ENCODE measurements at regions of chr17 and their contacts with region 1.

Region 1: DNA sequence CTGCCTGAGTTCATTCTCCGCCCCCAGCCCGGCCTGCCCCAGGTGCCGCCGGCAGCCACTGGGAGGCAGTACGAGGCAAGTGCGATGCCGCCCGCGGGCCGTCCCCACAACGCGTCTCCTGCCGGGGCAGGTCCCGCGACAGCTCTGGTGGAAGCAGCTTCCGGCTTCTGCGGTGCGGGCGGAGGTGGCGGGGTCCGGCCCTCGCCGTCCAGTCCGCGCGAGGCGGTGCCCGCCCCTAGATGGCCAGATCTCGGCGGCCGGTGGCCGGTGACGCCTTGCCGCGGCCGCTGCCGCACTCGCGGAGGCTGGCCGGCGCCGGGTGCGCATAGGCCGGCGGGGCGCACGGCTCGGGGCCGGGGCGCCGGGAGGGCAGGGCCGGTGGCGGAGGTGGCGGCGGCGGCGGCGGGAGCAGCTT is 1.8 kb downstream of the GJD3 start:
- DNase-seq: peak in 1 of 5 donors; percentile 45
- H3K4me3 ChIP-seq: peak overlapping the region; percentile 26
- H3K27ac ChIP-seq: no peak overlapping the region
- H3K4me1 ChIP-seq: peaks cover 5% of the 10 kb centered on the region
- H3K27me3 ChIP-seq: no peaks in the 10 kb centered on the region
- CTCF ChIP-seq: peak in 1 of 3 donors; percentile 14
- EP300 ChIP-seq: no peak
- POLR2A ChIP-seq: no peak

Region 2: GRCh38 chr17:40191237-40192208 is 171.2 kb before region 1 on chr17:
- intact Hi-C with region 1: loop called in 1 of 4 experiments (anchors 10 kb)
- DNase-seq: peak; percentile 77 to 85 (median 82)
- H3K4me3 ChIP-seq: peak overlapping the region; percentile 65
- H3K27ac ChIP-seq: peak overlapping the region; percentile 43 to 46
- H3K4me1 ChIP-seq: peaks cover 5% of the 10 kb centered on the region
- H3K27me3 ChIP-seq: no peaks in the 10 kb centered on the region
- CTCF ChIP-seq: peak; percentile 31 to 60 (median 56)
- EP300 ChIP-seq: no peak
- POLR2A ChIP-seq: no peak

Region 3: DNA sequence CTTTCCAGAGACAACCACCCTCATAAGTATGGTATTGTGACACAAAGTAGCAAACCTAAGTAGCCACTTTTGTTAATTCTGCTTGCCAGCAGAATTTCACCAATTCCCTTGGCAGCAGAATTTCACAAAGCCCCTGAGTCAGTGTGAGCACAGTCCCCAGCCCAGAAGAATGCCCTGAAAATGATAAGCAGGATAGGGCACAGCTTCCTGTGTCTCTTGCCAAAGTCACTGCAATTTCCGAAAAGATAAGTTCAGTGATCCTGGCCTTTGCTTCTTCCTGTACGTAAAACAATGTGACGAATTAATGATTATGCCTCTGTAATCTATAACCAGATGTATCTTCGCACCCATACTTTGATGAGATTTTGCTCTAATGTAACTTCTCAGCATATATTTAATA is 159.6 kb before region 1 on chr17:
- intact Hi-C with region 1: loop called in 3 of 4 experiments (anchors 5 to 10 kb)
- DNase-seq: no peak
- H3K4me3 ChIP-seq: no peak overlapping the region
- H3K27ac ChIP-seq: no peak overlapping the region
- H3K4me1 ChIP-seq: no peaks in the 10 kb centered on the region
- H3K27me3 ChIP-seq: no peaks in the 10 kb centered on the region
- CTCF ChIP-seq: no peak
- EP300 ChIP-seq: no peak
- POLR2A ChIP-seq: no peak

Region 4: GRCh38 chr17:40209404-40210093 is 153.2 kb before region 1 on chr17:
- intact Hi-C with region 1: loop called in 2 of 4 experiments (anchors 5 to 10 kb)
- DNase-seq: no peak
- H3K4me3 ChIP-seq: no peak overlapping the region
- H3K27ac ChIP-seq: no peak overlapping the region
- H3K4me1 ChIP-seq: no peaks in the 10 kb centered on the region
- H3K27me3 ChIP-seq: no peaks in the 10 kb centered on the region
- CTCF ChIP-seq: no peak
- EP300 ChIP-seq: no peak
- POLR2A ChIP-seq: no peak

Region 5: GRCh38 chr17:40433551-40434415 is 71.1 kb after region 1 on chr17:
- intact Hi-C with region 1: loop called in 1 of 4 experiments (anchors 10 kb)
- DNase-seq: no peak
- H3K4me3 ChIP-seq: no peak overlapping the region
- H3K27ac ChIP-seq: no peak overlapping the region
- H3K4me1 ChIP-seq: no peaks in the 10 kb centered on the region
- H3K27me3 ChIP-seq: no peaks in the 10 kb centered on the region
- CTCF ChIP-seq: peak in 2 of 3 donors; percentile 8 to 20
- EP300 ChIP-seq: no peak
- POLR2A ChIP-seq: no peak

Region 6: DNA sequence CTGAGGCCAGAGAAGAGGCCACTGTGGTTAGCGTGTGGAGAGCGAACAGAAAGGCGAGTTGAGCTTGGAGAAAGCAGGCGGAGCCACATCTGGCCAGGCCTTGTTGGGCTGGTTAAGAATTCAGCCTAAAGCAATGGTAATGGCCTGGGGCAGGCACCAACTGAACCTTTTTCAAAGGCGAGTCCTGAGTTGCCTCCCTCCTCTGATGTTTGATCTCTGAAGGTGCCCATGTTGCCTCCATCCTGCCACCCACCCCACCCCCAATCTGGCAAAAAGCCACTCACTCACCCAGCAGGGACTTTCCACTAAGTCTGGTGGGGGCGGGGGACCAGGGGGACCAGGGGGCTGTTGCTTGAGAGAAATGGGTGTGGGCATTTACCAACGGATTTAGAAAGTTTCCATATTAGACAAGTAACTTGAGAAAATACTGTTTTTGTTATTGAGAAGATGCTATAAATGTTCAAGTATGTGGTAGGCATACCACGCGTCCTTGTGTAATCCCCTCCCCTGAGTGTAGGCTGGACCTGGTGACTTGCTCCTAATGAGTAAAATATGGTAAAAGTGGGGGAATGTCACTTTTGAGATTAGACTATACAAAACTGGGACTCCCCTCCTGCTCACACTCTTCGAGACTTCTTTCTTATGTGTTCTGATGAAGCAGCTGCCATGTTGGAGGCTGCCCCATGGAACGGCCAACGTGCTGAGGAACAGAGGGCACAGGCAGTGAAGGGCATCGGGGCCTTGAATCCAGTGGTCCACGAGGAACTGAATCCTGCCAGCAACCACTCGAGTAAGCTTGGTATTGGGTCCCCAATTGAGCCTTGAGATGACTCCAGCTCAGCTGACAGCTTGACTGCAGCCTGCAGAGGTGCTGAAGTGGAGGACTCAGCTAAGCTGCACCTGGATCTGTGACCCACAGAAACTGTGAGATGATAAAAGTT is 168.6 kb after region 1 on chr17:
- intact Hi-C with region 1: loop called in 2 of 4 experiments (anchors 5 to 10 kb)
- DNase-seq: peak in 3 of 5 donors; percentile 27 to 45 (median 38)
- H3K4me3 ChIP-seq: no peak overlapping the region
- H3K27ac ChIP-seq: no peak overlapping the region
- H3K4me1 ChIP-seq: peaks cover 13% of the 10 kb centered on the region
- H3K27me3 ChIP-seq: no peaks in the 10 kb centered on the region
- CTCF ChIP-seq: no peak
- EP300 ChIP-seq: no peak
- POLR2A ChIP-seq: no peak

Region 7: GRCh38 chr17:40559954-40560591 is 197.4 kb after region 1 on chr17:
- intact Hi-C with region 1: loop called in 2 of 4 experiments (anchors 2 to 10 kb)
- DNase-seq: peak; percentile 89 to 96 (median 96)
- H3K4me3 ChIP-seq: no peak overlapping the region
- H3K27ac ChIP-seq: peak overlapping the region; percentile 46 to 63
- H3K4me1 ChIP-seq: peaks cover 29% of the 10 kb centered on the region
- H3K27me3 ChIP-seq: no peaks in the 10 kb centered on the region
- CTCF ChIP-seq: peak; percentile 93 to 98 (median 97)
- EP300 ChIP-seq: no peak
- POLR2A ChIP-seq: peak; percentile 26